GM12878 (cell line): ENCODE measurements at regions of chr10 and their contacts with region 1.

Region 1: GRCh38 chr10:91198781-91199180 is 21.7 kb upstream of the PCGF5 start:
- DNase-seq: peak; percentile 68
- ATAC-seq: peak; percentile 70
- H3K4me3 ChIP-seq: peak overlapping the region; percentile 53
- H3K27ac ChIP-seq: peak overlapping the region; percentile 61
- H3K4me1 ChIP-seq: peaks cover 47% of the 10 kb centered on the region
- H3K27me3 ChIP-seq: no peaks in the 10 kb centered on the region
- CTCF ChIP-seq: no peak
- EP300 ChIP-seq: peak in 1 of 2 experiments; percentile 15; a peak in 1 of 4 replicates
- POLR2A ChIP-seq: no peak
- RAD21 ChIP-seq: no peak

Region 2: GRCh38 chr10:90407161-90407571 is 791.6 kb before region 1 on chr10:
- CTCF ChIA-PET with region 1: no interaction called
- POLR2A ChIA-PET with region 1: no interaction called
- RAD21 ChIA-PET with region 1: no interaction called
- SMC1A ChIA-PET with region 1: no interaction called
- in situ Hi-C with region 1: no loop called
- intact Hi-C with region 1: no loop called
- DNase-seq: no peak
- ATAC-seq: no peak
- H3K4me3 ChIP-seq: no peak overlapping the region
- H3K27ac ChIP-seq: no peak overlapping the region
- H3K4me1 ChIP-seq: no peaks in the 10 kb centered on the region
- H3K27me3 ChIP-seq: no peaks in the 10 kb centered on the region; a peak in 1 of 4 replicates
- CTCF ChIP-seq: no peak
- EP300 ChIP-seq: no peak
- POLR2A ChIP-seq: no peak
- RAD21 ChIP-seq: no peak

Region 3: GRCh38 chr10:90999512-91000172 is 199.1 kb before region 1 on chr10:
- CTCF ChIA-PET with region 1: interaction called, 6 read pairs
- POLR2A ChIA-PET with region 1: interaction called, 4 read pairs
- RAD21 ChIA-PET with region 1: interaction called, 16 read pairs
- SMC1A ChIA-PET with region 1: interaction called, 18 read pairs
- in situ Hi-C with region 1: no loop called
- intact Hi-C with region 1: no loop called
- DNase-seq: peak; percentile 54
- ATAC-seq: peak; percentile 69
- H3K4me3 ChIP-seq: no peak overlapping the region
- H3K27ac ChIP-seq: peak overlapping the region; percentile 87
- H3K4me1 ChIP-seq: peaks cover 33% of the 10 kb centered on the region
- H3K27me3 ChIP-seq: no peaks in the 10 kb centered on the region
- CTCF ChIP-seq: no peak
- EP300 ChIP-seq: peak; percentile 31 to 80; a peak in 2 of 4 replicates
- POLR2A ChIP-seq: no peak
- RAD21 ChIP-seq: no peak

Region 4: DNA sequence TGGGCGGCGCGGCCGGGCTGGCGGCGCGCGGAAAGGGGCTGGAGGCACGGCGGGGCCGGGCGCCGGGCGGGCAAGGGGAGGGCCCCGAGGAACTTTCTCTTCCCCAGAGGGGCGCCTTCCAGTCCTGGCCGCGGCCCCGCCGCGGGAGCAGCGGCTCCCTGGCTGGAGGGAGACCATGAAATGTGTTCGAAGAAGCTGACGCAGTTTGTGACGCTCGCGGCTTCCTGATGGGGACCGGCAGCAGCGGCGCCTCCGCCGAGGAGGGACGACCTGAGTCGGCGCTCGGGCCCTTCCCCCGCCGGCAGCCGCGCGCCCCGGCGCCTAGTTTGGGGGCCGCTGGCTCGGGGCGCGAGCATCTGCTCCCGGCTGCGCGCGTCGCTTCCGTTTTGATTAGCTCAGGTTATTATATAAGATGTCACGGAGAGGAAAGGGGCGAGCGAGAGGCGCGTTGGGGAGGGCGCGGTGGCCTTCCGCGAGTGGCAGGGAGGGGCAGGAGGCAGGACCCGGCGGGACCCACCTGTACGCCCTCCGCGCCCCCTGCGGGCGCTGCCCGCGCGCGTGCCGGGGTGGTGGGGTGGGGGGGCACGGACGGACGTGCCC is 35.4 kb before region 1 on chr10:
- CTCF ChIA-PET with region 1: interaction called, 7 read pairs
- POLR2A ChIA-PET with region 1: interaction called, 4 read pairs
- RAD21 ChIA-PET with region 1: interaction called, 19 read pairs
- SMC1A ChIA-PET with region 1: interaction called, 15 read pairs
- in situ Hi-C with region 1: no loop called
- intact Hi-C with region 1: no loop called
- DNase-seq: no peak
- ATAC-seq: peak; percentile 74
- H3K4me3 ChIP-seq: peak overlapping the region; percentile 84
- H3K27ac ChIP-seq: peak overlapping the region; percentile 79
- H3K4me1 ChIP-seq: peaks cover 14% of the 10 kb centered on the region; the same call in 1 of the 2 replicates
- H3K27me3 ChIP-seq: no peaks in the 10 kb centered on the region
- CTCF ChIP-seq: no peak
- EP300 ChIP-seq: 0 out of 4 replicates have a peak, but pooled peaks of 1 of the 2 experiments have one; percentile 30
- POLR2A ChIP-seq: peak; percentile 87
- RAD21 ChIP-seq: no peak; the same call in 1 of the 2 replicates

Region 5: GRCh38 chr10:91210435-91210834 is 11.7 kb after region 1 on chr10:
- CTCF ChIA-PET with region 1: interaction called, 4 read pairs
- POLR2A ChIA-PET with region 1: interaction called, 6 read pairs
- RAD21 ChIA-PET with region 1: interaction called, 14 read pairs
- SMC1A ChIA-PET with region 1: interaction called, 23 read pairs
- in situ Hi-C with region 1: no loop called
- intact Hi-C with region 1: no loop called
- DNase-seq: no peak
- ATAC-seq: peak; percentile 86
- H3K4me3 ChIP-seq: no peak overlapping the region
- H3K27ac ChIP-seq: no peak overlapping the region
- H3K4me1 ChIP-seq: peaks cover 36% of the 10 kb centered on the region
- H3K27me3 ChIP-seq: no peaks in the 10 kb centered on the region
- CTCF ChIP-seq: no peak
- EP300 ChIP-seq: no peak; a peak in 1 of 4 replicates
- POLR2A ChIP-seq: no peak
- RAD21 ChIP-seq: no peak

Region 6: DNA sequence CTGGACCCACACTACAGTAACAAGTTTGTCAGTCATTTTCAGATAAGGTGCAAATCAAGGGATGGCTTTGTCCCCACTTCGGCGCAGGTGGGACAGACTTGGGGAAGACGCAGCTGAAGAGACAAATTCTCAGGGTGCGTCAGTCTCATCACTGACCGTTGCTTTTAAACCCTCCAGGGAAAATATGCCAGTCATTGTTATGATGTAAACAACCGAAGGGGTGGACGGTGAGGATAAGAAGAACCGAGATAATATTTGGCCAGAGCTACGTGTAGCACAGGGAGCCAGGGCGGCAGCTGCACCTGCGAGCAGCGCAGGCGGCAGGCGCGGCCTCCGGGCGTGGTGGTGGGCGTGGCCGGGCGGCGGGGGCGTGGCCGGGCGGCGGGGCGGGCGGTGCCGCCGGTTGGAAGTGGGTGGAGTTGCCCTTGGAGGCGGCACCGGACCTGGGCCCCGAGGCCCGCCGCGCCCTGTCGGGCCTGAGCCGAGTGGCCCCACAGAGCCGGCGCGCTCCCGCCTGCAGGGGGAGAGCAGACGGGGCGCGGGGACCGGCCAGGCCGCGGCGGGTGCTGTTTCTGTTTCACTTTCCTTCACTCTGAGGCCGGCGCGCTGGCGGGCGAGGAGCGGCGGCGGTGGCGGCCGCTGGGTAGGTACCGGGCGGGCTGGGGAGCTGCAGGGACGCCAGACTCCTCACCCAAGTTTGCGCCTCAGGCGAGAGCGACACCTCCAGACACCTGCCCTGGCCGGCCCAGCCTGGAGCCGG is 21.6 kb after region 1 on chr10 and contains the start of gene PCGF5:
- CTCF ChIA-PET with region 1: interaction called, 7 read pairs
- POLR2A ChIA-PET with region 1: interaction called, 9 read pairs
- RAD21 ChIA-PET with region 1: interaction called, 14 read pairs
- SMC1A ChIA-PET with region 1: interaction called, 56 read pairs
- in situ Hi-C with region 1: no loop called
- intact Hi-C with region 1: no loop called
- DNase-seq: no peak
- ATAC-seq: peak; percentile 99
- H3K4me3 ChIP-seq: peak within 1 kb of the TSS; percentile 99
- H3K27ac ChIP-seq: peak within 1 kb of the TSS; percentile 84
- H3K4me1 ChIP-seq: peaks cover 10% of the 10 kb centered on the region; the same call in 1 of the 2 replicates
- H3K27me3 ChIP-seq: no peaks in the 10 kb centered on the region
- CTCF ChIP-seq: peak in 2 of 3 experiments; percentile 24 to 39; a peak in 3 of 6 replicates
- EP300 ChIP-seq: no peak
- POLR2A ChIP-seq: peak; percentile 82
- RAD21 ChIP-seq: no peak
- polyA plus RNA-seq, gene PCGF5: 33.2 to 35.0 TPM

Region 7: GRCh38 chr10:91227576-91227975 is 28.8 kb after region 1 on chr10:
- CTCF ChIA-PET with region 1: interaction called, 8 read pairs
- POLR2A ChIA-PET with region 1: interaction called, 3 read pairs
- RAD21 ChIA-PET with region 1: interaction called, 12 read pairs
- SMC1A ChIA-PET with region 1: interaction called, 56 read pairs
- in situ Hi-C with region 1: no loop called
- intact Hi-C with region 1: no loop called
- DNase-seq: no peak
- ATAC-seq: peak; percentile 71
- H3K4me3 ChIP-seq: no peak overlapping the region
- H3K27ac ChIP-seq: no peak overlapping the region
- H3K4me1 ChIP-seq: peaks cover 8% of the 10 kb centered on the region
- H3K27me3 ChIP-seq: no peaks in the 10 kb centered on the region
- CTCF ChIP-seq: no peak
- EP300 ChIP-seq: no peak
- POLR2A ChIP-seq: no peak
- RAD21 ChIP-seq: no peak

Region 8: GRCh38 chr10:91313796-91314485 is 115.2 kb after region 1 on chr10:
- CTCF ChIA-PET with region 1: no interaction called
- POLR2A ChIA-PET with region 1: no interaction called
- RAD21 ChIA-PET with region 1: no interaction called
- SMC1A ChIA-PET with region 1: no interaction called
- in situ Hi-C with region 1: no loop called
- intact Hi-C with region 1: no loop called
- DNase-seq: no peak
- ATAC-seq: peak; percentile 73
- H3K4me3 ChIP-seq: no peak overlapping the region
- H3K27ac ChIP-seq: no peak overlapping the region
- H3K4me1 ChIP-seq: no peaks in the 10 kb centered on the region
- H3K27me3 ChIP-seq: peaks cover 0 to 3% of the 10 kb centered on the region in 2 experiments; a peak in 2 of 4 replicates
- CTCF ChIP-seq: no peak
- EP300 ChIP-seq: no peak
- POLR2A ChIP-seq: no peak
- RAD21 ChIP-seq: no peak

Region 9: GRCh38 chr10:91406322-91406721 is 207.5 kb after region 1 on chr10:
- CTCF ChIA-PET with region 1: no interaction called
- POLR2A ChIA-PET with region 1: no interaction called
- RAD21 ChIA-PET with region 1: no interaction called
- SMC1A ChIA-PET with region 1: no interaction called
- in situ Hi-C with region 1: no loop called
- intact Hi-C with region 1: no loop called
- DNase-seq: no peak
- ATAC-seq: no peak
- H3K4me3 ChIP-seq: no peak overlapping the region
- H3K27ac ChIP-seq: no peak overlapping the region
- H3K4me1 ChIP-seq: no peaks in the 10 kb centered on the region
- H3K27me3 ChIP-seq: no peaks in the 10 kb centered on the region
- CTCF ChIP-seq: no peak
- EP300 ChIP-seq: no peak
- POLR2A ChIP-seq: no peak
- RAD21 ChIP-seq: no peak

Region 10: DNA sequence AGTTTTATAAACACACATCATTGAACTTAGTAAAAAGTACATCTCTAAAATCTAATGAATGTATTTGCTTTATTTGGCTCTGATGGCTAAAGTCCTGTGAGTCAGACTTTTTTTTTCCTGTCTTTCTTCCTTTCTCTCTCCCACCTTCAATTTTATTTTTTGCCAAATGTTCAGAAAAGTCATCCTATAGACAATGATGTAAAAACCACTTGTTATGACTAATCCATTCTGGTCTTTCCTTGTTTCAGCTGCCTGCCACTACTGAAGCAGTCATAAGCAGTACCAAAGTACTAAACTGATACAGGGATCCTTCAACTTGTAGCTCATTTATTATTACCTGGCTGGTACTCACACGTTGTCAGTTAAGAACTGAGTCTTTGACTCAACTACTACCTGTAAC is 235.3 kb after region 1 on chr10:
- CTCF ChIA-PET with region 1: no interaction called
- POLR2A ChIA-PET with region 1: no interaction called
- RAD21 ChIA-PET with region 1: no interaction called
- SMC1A ChIA-PET with region 1: no interaction called
- in situ Hi-C with region 1: no loop called
- intact Hi-C with region 1: no loop called
- DNase-seq: no peak
- ATAC-seq: no peak
- H3K4me3 ChIP-seq: no peak overlapping the region
- H3K27ac ChIP-seq: no peak overlapping the region
- H3K4me1 ChIP-seq: no peaks in the 10 kb centered on the region
- H3K27me3 ChIP-seq: no peaks in the 10 kb centered on the region
- CTCF ChIP-seq: no peak
- EP300 ChIP-seq: no peak
- POLR2A ChIP-seq: no peak
- RAD21 ChIP-seq: no peak